Posterior vena cava (tissue), 2 donors: ENCODE measurements at regions of chrX and their contacts with region 1.

Region 1: GRCh38 chrX:47854474-47854873 is 17.8 kb downstream of the ZNF81 start:
- DNase-seq: no peak

Region 2: DNA sequence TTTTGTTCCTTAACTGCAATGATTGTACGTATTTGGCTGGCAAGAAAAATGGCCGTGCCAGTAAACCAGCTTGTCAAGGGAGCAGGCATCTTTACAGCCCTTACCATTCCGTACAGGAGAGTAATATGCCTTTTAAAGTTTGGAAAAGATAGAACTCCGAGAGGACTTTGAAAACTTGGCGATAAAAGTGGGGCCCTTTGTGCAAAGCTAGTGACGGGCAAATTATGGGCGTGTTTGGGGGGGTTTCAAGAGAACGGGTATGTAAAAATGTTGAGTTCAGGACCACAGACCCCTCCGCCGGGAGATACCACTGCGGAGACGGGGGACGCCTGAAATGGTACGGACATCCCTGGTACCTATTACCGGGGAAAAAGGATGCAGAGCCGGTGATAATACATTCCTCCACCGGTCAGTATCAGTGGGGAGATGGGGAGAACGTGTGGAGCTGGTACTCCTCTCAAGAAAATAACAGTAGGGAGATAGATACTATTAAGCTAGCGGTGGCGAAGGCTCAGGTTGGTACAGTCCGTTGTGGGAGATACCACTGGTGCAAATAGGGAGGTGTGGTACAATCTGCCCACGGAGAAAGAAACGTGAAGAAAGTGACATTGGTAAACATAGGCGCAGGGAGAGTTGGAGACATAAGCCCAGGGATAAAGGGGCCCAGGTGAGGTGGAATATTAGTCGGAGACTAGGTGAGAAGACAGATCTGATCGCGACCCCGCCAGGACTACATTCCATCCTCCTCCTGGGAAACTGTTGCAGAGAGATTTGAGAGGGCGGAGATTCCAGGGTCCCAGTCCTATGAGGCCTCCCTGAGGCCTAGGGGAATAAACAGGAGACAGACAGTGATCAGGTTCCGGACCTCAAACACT is 166.8 kb after region 1 on chrX:
- intact Hi-C with region 1: loop called in 1 of 2 experiments (anchors 10 kb)
- DNase-seq: peak; percentile 93

Region 3: GRCh38 chrX:49725923-49726904 is 1871.7 kb after region 1 on chrX:
- intact Hi-C with region 1: loop called in 1 of 2 experiments (anchors 10 kb)
- DNase-seq: no peak